ENCODE measurements at regions of chr1 and their contacts with region 1.

Region 1: DNA sequence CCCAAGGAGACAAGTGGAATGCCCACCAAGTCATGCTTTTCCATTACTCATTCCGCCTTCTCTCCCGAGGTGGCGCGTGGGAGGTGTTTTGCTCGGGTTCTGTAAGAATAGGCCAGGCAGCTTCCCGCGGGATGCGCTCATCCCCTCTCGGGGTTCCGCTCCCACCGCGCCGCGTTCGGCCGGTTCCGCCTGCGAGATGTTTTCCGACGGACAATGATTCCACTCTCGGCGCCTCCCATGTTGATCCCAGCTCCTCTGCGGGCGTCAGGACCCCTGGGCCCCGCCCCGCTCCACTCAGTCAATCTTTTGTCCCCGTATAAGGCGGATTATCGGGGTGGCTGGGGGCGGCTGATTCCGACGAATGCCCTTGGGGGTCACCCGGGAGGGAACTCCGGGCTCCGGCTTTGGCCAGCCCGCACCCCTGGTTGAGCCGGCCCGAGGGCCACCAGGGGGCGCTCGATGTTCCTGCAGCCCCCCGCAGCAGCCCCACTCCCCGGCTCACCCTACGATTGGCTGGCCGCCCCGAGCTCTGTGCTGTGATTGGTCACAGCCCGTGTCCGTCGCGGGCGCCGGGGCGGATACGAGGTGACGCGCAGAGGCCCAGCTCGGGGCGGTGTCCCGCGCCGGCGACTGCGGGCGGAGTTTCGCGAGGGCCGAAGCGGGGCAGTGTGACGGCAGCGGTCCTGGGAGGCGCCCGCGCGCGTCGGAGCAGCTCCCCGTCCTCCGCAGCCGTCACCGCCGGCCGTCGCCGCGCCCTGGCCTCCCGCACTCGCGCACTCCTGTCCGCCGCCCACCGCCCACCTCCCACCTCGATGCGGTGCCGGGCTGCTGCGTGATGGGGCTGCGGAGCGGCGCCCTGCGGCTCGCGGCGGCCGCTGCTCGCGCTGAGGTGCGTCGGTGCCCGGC is at the start of gene KIF1B:
- DNase-seq: peak; percentile 100
- CTCF ChIP-seq: peak; percentile 78

Region 2: GRCh38 chr1:10001016-10001665 is 209.0 kb before region 1 on chr1:
- CTCF ChIA-PET with region 1: no interaction called
- POLR2A ChIA-PET with region 1: no interaction called
- DNase-seq: no peak
- CTCF ChIP-seq: no peak

Region 3: GRCh38 chr1:10178597-10179405 is 31.4 kb before region 1 on chr1:
- CTCF ChIA-PET with region 1: interaction called, 14 read pairs
- POLR2A ChIA-PET with region 1: no interaction called
- DNase-seq: no peak
- CTCF ChIP-seq: no peak

Region 4: DNA sequence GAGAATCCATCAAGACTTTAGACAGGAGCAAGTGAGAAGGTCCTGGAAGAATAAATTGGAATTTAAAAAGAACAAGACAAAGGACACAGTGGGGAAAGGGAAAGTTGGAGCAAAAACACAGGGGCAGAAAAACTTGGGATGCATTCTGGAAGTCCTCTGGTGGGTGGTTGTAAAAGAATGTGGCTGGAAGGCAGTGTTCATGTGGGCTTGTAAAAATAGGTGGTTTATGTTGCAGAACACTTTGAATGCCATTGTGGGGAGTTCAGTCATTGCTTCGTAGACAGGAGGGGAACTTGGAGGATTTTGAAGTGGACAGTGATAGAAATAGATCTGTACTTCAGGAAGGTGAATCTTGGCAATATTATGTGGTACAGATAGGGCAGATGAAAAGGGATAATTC is 15.4 kb after region 1 on chr1:
- CTCF ChIA-PET with region 1: interaction called, 24 read pairs
- POLR2A ChIA-PET with region 1: interaction called, 3 read pairs
- DNase-seq: no peak
- CTCF ChIP-seq: no peak

Region 5: GRCh38 chr1:10252508-10252907 is 42.4 kb after region 1 on chr1:
- CTCF ChIA-PET with region 1: interaction called, 10 read pairs
- POLR2A ChIA-PET with region 1: no interaction called
- DNase-seq: no peak
- CTCF ChIP-seq: no peak

Region 6: DNA sequence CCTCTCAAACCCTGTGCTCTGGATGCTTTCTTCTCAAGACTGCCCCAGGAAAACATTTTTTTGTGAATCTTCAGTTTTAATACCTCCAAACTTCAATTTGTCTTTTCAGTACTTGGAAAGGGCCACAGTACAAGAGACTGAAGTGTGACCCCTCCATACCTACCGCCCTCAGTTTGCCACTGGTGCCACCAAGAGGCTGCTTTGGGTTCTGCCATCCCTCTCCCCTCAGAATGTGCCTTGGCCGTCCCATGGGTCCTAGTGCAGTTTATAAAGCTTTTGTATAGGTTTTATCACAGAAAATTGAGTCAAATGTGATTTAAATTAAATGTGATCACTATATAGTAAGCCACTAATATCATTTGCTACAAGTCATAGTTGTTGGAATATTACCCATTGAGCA is 127.9 kb after region 1 on chr1:
- CTCF ChIA-PET with region 1: interaction called, 45 read pairs
- POLR2A ChIA-PET with region 1: no interaction called
- DNase-seq: peak; percentile 67
- CTCF ChIP-seq: peak; percentile 79

Measured in GM10248 (cell line).